T-cell (primary cell): ENCODE measurements at regions of chr12 and their contacts with region 1.

Region 1: DNA sequence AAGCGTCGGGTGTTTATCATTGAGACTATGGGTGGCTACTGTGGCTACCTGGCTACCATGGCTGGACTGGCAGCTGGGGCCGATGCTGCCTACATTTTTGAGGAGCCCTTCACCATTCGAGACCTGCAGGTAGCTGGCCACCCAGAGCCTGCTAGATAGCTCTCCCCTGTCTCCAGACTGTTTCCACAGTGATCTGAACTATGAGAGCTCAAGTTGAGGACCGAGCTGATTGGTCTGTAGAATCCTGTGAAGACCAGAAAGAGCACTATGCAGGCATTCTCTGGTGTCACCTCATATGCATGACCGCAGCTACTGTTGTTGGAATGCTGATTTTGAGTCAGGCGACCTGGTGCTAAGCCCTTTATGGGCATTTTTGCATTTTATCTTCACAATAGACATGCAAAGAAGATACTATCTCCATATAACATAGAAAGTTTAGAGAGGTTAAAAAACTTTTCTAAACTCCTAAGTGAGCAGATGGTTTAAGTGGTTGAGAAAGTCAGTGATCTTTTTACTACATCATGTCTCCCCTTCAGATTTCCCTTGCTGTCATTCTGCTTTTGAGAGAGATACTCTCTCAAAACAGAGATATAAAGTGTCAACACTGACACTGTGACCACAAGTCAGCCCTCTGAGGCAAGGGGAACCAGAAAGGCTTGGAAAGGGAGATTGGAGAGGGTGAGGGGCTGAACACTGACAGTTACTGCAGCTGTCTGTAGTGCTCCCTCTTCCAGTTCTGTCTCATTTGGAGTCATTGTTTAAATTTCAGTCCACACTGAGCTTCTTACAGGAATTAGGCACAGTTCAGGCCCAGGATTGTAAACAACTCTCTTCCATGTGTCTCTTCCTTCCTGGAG is 14.3 kb downstream of the ASB8 start:
- DNase-seq: no peak
- ATAC-seq: no peak
- H3K4me3 ChIP-seq: no peak overlapping the region
- H3K4me3 Mint-ChIP-seq: no peak overlapping the region
- H3K27ac ChIP-seq: no peak overlapping the region
- H3K27ac Mint-ChIP-seq: no peak overlapping the region
- H3K4me1 ChIP-seq: no peaks in the 10 kb centered on the region
- H3K4me1 Mint-ChIP-seq: peaks cover 0 to under 1% (median 0%) of the 10 kb centered on the region in 3 donors
- H3K27me3 ChIP-seq: no peaks in the 10 kb centered on the region
- H3K27me3 Mint-ChIP-seq: no peaks in the 10 kb centered on the region

Region 2: DNA sequence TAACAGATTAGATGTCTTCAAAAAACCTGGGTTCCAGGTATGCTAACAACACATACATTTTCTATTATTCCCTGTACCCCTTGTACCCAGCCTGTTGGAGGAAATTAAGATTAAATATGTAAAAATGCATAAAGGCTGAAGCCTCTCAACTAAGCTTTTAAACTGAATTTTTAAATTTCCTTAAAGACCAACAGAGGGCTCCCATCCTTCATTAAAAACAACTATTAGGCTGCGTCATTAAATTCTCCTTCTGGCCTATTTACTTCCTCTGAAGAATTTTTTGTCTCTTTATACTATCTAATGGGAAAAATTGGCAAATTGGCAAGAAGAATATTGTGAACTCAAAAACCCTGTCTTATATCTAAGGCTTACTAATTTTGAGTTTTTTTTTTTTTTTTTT is 59.0 kb before region 1 on chr12:
- CTCF ChIA-PET with region 1: no interaction called
- POLR2A ChIA-PET with region 1: interaction called in 1 of 2 experiments, 11 read pairs
- DNase-seq: peak in 1 of 35 experiments; percentile 30
- ATAC-seq: no peak
- H3K4me3 ChIP-seq: no peak overlapping the region
- H3K4me3 Mint-ChIP-seq: no peak overlapping the region
- H3K27ac ChIP-seq: no peak overlapping the region
- H3K27ac Mint-ChIP-seq: no peak overlapping the region
- H3K4me1 ChIP-seq: no peaks in the 10 kb centered on the region
- H3K4me1 Mint-ChIP-seq: no peaks in the 10 kb centered on the region
- H3K27me3 ChIP-seq: no peaks in the 10 kb centered on the region
- H3K27me3 Mint-ChIP-seq: no peaks in the 10 kb centered on the region

Region 3: DNA sequence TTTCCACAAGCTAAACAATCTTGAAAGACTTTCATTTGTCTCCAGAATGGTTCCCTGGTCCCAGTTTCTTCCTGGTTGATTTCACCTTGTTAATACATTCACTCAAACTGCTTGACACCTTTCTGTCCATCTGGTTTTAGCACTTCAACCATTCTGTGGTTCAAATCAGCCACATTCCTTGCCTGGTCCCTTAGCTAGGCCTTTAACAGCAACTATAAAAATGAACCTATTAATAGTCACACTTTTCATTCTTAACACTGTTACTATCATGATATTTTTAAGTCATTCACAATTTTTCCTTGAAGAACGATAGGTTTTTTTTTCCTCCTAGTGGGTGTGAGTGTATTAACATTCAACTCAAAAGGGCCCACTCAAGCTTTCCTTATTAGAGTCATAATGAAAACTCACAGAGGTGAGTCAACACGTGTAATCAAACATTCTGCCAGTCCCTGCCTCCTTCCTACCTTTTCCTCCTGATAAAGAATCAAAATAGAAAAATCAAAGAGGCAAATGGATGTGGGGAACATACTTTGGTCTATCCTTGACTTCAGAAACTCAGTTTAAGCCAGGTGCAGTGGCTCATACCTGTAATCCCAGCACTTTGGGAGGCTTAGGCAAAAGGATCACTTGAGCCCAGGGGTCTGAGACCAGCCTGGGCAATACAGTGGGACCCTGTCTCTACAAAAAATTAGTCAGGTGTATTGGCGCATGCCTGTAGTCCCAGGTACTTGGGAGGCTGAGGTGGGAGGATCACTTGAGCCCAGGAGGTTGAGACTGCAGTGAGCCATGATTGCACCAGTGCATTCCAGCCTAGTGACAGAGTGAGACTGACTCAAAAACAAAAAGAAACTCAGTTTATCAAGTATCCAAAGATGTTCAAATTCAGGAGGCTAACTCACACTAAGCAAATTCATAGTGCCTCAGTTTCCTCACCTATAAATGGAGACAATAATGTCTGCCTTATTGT is 608.0 kb after region 1 on chr12:
- CTCF ChIA-PET with region 1: no interaction called
- POLR2A ChIA-PET with region 1: interaction called in 1 of 2 experiments, 10 read pairs
- DNase-seq: no peak
- ATAC-seq: no peak
- H3K4me3 ChIP-seq: no peak overlapping the region
- H3K4me3 Mint-ChIP-seq: no peak overlapping the region
- H3K27ac ChIP-seq: no peak overlapping the region
- H3K27ac Mint-ChIP-seq: no peak overlapping the region
- H3K4me1 ChIP-seq: no peaks in the 10 kb centered on the region
- H3K4me1 Mint-ChIP-seq: no peaks in the 10 kb centered on the region
- H3K27me3 ChIP-seq: no peaks in the 10 kb centered on the region
- H3K27me3 Mint-ChIP-seq: no peaks in the 10 kb centered on the region